Prostate gland (tissue), 2 donors: ENCODE measurements at regions of chr17 and their contacts with region 1.

Region 1: DNA sequence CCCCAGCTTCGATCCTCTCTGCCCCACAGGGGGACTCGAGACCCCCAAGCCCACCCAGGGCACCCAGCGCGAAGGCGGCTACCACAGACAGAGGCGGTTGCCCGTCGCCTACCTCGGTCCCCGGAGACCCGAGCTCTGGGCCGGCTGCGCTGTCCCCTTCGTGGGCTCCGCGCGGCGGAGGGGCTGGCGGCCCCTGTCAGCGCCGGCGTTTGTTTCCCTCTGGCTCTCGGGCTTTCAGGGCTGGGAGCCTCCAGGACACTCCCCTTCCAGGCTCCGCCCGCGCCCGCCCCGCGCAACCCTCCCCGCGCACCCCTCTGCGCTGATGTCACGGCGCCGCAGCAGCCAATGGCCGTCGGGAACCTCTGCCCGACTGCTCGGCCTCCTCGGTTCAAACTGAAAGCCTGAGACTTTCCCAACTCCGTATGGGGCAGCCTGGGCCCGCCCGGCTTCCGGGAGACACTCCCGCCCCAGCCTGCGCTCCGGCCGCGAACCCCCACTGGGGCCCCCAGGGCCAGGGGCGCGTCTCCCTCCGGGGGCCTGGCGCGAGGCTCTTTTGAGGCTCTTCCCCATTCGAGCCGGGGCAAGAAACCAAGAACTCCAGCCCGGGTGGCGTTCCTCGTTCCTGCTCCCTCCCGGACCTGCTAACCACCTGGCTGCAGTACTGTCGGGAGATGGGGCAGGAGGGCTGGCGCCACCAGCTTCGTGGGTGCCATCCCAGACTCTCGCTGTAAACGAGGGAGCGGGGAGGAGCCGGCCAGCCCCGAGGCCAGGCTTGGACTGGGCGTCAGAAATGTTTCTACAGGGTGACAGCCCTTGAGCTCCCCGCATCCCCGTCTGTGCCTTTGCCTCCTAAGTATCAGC is at the start of gene CDC42EP4:
- DNase-seq: peak; percentile 98
- H3K4me3 ChIP-seq: peak within 1 kb of the TSS; percentile 96 to 98
- H3K27ac ChIP-seq: peak within 1 kb of the TSS; percentile 99
- H3K4me1 ChIP-seq: peaks cover 12% of the 10 kb centered on the region
- H3K27me3 ChIP-seq: no peaks in the 10 kb centered on the region
- CTCF ChIP-seq: peak in 1 of 4 experiments; percentile 15
- POLR2A ChIP-seq: peak; percentile 100
- total RNA-seq, gene CDC42EP4: 119 to 186 TPM

Region 2: DNA sequence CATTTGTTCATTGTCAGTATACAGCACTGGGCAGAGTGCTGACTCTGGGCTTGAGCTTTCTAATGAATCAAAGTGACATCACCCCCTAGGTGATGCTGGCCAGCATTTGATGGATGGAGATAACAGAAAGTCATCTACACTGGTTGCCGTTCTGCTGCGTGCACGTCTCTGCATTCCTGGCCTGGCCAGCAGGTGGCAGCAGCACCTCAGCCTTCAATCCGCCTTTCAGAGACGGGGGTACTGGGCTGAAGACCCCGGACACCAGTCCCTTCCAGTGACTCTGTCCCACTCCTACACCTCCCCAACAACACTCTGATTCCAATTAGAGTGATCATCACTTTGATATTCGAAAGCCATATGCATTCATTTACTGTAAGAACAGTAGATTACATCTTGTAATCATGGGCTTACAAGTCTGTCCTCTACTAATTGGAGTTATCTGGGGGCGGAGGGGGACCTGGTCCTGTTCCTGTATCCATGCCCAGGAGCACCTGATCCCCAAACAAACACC is 56.3 kb before region 1 on chr17:
- intact Hi-C with region 1: loop called (anchors 10 kb)
- DNase-seq: peak; percentile 41
- H3K4me3 ChIP-seq: no peak overlapping the region
- H3K27ac ChIP-seq: no peak overlapping the region
- H3K4me1 ChIP-seq: no peaks in the 10 kb centered on the region
- H3K27me3 ChIP-seq: no peaks in the 10 kb centered on the region
- CTCF ChIP-seq: peak; percentile 97 to 99 (median 98)
- POLR2A ChIP-seq: no peak

Region 3: DNA sequence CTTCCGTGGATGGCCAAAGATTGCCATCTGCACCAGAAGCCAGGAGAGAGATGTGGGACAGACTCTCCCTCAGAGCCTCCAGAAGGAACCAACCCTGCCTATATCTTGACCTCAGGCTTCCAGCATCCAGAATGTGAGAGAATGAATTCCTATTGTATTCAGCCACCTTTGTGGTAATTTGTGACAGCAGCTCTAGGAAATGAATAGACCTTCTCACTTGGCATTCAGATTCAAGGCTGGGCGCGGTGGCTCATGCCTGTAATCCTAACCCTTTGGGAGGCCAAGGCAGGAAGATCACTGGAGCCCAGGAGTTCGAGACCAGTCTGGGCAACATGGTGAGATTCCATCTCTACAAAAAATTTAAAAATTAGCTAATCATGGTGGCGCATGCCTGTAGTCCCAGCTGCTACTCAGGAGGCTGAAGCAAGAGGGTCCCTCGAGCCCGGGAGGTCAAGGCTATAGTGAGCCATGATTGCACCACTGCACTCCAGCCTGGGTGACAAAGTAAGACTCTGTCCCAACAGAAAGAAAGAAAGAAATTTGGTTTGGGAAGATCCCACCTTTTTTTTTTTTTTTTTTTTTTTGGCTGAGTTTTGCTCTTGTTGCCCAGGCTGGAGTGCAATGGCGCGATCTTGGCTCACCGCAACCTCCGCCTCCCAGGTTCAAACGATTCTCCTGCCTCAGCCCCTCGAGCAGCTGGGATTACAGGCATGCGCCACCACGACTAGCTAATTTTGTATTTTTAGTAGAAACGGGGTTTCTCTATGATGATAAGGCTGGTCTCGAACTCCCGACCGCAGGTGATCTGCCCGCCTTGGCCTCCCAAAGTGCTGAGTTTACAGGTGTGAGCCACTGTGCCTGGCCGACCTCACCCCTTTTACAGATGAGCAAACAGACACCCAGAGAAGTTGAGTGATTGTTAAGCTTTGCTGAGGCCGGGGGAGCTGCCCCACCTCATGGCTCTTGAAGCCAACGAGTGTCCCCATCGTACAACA is 46.1 kb before region 1 on chr17:
- intact Hi-C with region 1: no loop called
- DNase-seq: no peak
- H3K4me3 ChIP-seq: no peak overlapping the region
- H3K27ac ChIP-seq: no peak overlapping the region
- H3K4me1 ChIP-seq: peaks cover 7% of the 10 kb centered on the region
- H3K27me3 ChIP-seq: no peaks in the 10 kb centered on the region
- CTCF ChIP-seq: no peak
- POLR2A ChIP-seq: no peak

Region 4: DNA sequence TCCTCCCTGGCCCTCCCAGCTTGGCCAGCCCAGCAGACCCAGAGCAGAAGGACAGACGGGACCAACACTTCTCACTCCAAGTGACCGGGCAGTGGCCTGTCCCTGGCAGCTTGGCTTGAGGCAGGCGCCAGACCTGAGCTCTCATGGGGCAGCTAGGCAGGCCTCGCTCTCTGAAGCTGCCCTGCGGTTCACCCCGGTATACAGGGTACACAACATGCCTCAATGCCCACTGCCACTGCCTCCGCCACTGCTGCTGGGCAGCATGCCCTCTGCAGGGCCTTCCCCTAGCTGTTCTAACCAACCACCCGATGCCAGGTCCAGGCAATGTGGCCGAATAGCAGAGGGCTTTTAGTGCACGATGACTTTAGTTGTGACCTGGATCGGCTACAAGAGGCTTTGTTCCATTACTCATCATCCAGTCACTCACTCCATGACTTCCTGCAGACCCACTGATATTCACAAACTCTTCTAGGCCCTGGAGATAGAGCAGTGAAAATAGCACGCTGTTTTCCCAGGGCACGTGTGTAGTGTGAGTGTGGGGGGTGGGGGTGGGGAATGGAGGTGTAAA is 20.0 kb before region 1 on chr17:
- intact Hi-C with region 1: loop called (anchors 2 kb)
- DNase-seq: no peak
- H3K4me3 ChIP-seq: no peak overlapping the region
- H3K27ac ChIP-seq: peak overlapping the region; percentile 82 to 86
- H3K4me1 ChIP-seq: peaks cover 47% of the 10 kb centered on the region
- H3K27me3 ChIP-seq: no peaks in the 10 kb centered on the region
- CTCF ChIP-seq: no peak
- POLR2A ChIP-seq: no peak

Region 5: GRCh38 chr17:73371285-73371684 is 59.3 kb after region 1 on chr17:
- intact Hi-C with region 1: loop called (anchors 2 kb)
- DNase-seq: no peak
- H3K4me3 ChIP-seq: no peak overlapping the region
- H3K27ac ChIP-seq: no peak overlapping the region
- H3K4me1 ChIP-seq: no peaks in the 10 kb centered on the region
- H3K27me3 ChIP-seq: no peaks in the 10 kb centered on the region
- CTCF ChIP-seq: no peak
- POLR2A ChIP-seq: no peak